Natural killer cell (primary cell): ENCODE measurements at regions of chr6 and their contacts with region 1.

Region 1: GRCh38 chr6:24991810-24992467 is 56.2 kb upstream of the RIPOR2 start:
- DNase-seq: peak; percentile 47 to 91
- ATAC-seq: peak; percentile 94 to 99 (median 98)
- H3K4me3 ChIP-seq: no peak overlapping the region
- H3K4me3 Mint-ChIP-seq: peak overlapping the region; percentile 14
- H3K27ac ChIP-seq: peak overlapping the region; percentile 52
- H3K27ac Mint-ChIP-seq: peak overlapping the region; percentile 61 to 84
- H3K4me1 ChIP-seq: peaks cover 14% of the 10 kb centered on the region
- H3K4me1 Mint-ChIP-seq: peaks cover 51 to 55% of the 10 kb centered on the region in 2 donors
- H3K27me3 ChIP-seq: no peaks in the 10 kb centered on the region
- H3K27me3 Mint-ChIP-seq: no peaks in the 10 kb centered on the region
- CTCF ChIP-seq: peak; percentile 84

Region 2: DNA sequence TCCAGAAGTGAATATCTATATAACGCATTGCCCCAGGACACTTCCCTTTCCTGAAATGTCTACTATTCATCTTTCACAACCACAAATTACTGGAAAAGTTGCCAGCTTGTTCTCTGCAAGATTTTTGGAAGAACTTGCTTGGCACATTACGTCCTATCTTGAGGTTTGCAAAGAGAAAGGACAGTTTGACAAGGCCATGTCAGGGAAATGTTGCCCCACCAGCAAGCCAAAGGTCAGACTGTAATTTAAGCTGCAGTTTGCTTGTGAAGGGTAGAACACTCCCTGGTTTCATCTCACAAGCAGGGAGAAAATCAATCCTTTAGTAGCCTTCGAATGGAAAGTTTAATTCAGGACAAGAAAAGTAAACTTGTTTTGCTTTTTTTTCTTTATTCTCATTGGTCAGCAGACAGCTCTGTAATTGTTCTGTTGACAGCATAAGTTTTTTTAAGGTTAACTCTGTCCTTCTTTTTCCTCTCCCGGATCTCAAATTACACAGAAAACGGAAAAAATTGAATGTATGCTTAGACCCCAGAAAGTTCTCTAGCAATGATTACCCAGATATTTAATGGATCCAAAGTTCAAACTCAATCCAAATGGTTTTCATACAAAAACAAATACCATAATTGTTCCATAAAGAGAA is 1407.7 kb before region 1 on chr6:
- intact Hi-C with region 1: no loop called
- DNase-seq: no peak
- ATAC-seq: no peak
- H3K4me3 ChIP-seq: no peak overlapping the region
- H3K4me3 Mint-ChIP-seq: no peak overlapping the region
- H3K27ac ChIP-seq: no peak overlapping the region
- H3K27ac Mint-ChIP-seq: no peak overlapping the region
- H3K4me1 ChIP-seq: no peaks in the 10 kb centered on the region
- H3K4me1 Mint-ChIP-seq: no peaks in the 10 kb centered on the region
- H3K27me3 ChIP-seq: no peaks in the 10 kb centered on the region
- H3K27me3 Mint-ChIP-seq: no peaks in the 10 kb centered on the region
- CTCF ChIP-seq: no peak

Region 3: GRCh38 chr6:24855395-24856245 is 136.3 kb before region 1 on chr6:
- intact Hi-C with region 1: loop called (anchors 1 kb)
- DNase-seq: peak; percentile 48 to 92
- ATAC-seq: peak; percentile 77 to 84 (median 83)
- H3K4me3 ChIP-seq: no peak overlapping the region
- H3K4me3 Mint-ChIP-seq: peak overlapping the region; percentile 49
- H3K27ac ChIP-seq: peak overlapping the region; percentile 45
- H3K27ac Mint-ChIP-seq: peak overlapping the region; percentile 93 to 95
- H3K4me1 ChIP-seq: peaks cover 45% of the 10 kb centered on the region
- H3K4me1 Mint-ChIP-seq: peaks cover 50 to 59% of the 10 kb centered on the region in 2 donors
- H3K27me3 ChIP-seq: no peaks in the 10 kb centered on the region
- H3K27me3 Mint-ChIP-seq: no peaks in the 10 kb centered on the region
- CTCF ChIP-seq: peak; percentile 84

Region 4: DNA sequence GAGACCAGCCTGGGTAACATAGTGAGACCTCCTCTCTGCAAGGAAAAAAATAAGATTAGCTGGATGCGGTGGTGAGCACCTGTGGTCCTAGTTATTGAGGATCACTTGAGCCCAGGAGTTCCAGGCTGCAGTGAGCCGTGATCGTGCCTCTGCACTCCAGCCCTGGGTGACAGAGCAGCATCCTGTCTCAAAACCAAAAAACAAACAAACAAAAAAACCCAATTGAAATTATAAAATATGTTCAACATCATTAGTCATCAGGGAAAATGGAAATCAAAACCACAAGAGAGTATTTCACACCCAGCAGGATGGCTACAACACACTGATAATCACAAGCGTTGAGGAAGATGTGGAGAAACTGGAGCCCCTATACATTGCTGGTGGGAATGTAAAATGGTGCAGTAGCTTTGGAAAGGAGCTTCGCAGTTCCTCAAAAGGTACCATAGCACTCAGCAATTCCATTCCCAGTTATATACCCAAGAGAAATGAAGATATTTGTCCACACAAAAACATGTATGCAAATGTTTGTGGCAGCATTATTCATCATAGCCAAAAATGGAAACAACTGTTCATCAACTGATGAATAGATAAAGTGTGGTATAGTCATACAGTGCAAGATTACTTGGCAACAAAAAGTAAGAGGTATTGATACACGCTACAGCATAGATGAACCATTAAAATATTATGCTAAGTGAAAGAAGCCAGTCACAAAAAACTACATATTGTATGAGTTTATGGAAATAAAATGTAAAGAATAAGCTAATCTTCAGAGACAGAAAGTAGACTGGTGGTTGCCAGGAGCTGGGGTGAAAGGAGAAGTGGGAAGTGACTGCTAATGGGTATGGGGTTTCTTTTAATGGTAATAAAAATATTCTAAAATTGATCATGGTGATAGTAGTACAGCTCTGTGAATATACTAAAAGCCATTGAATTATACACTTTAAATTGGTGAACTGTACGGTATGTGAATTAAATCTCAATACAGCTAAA is 17.5 kb before region 1 on chr6:
- intact Hi-C with region 1: loop called (anchors 2 kb)
- DNase-seq: peak in 1 of 2 donors; percentile 59
- ATAC-seq: peak; percentile 73 to 76 (median 74)
- H3K4me3 ChIP-seq: no peak overlapping the region
- H3K4me3 Mint-ChIP-seq: peak overlapping the region; percentile 54
- H3K27ac ChIP-seq: peak overlapping the region; percentile 76
- H3K27ac Mint-ChIP-seq: peak overlapping the region; percentile 90 to 92
- H3K4me1 ChIP-seq: peaks cover 21% of the 10 kb centered on the region
- H3K4me1 Mint-ChIP-seq: peaks cover 60 to 70% of the 10 kb centered on the region in 2 donors
- H3K27me3 ChIP-seq: no peaks in the 10 kb centered on the region
- H3K27me3 Mint-ChIP-seq: no peaks in the 10 kb centered on the region
- CTCF ChIP-seq: no peak

Region 5: DNA sequence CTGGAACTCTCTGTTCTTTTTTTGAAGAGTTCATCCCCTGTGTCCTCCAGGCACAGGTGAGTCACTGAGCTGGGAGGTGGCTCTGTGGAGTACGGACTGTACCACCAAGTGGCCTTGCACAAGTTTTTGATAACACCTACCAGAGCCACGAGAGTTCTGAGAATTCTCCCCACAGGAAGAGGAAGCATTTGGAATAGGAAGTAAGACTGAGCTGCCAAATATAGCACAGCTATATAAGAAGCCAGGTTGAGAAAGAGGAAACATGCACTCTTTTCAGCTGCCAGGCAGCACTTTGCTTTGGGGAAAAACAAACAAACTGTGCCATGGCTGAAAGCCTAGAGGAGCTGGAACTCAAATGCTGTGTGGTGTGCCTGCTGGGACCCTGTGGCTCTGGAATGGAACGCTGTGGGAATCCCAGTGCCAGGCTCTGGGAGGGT is 14.6 kb after region 1 on chr6:
- intact Hi-C with region 1: loop called (anchors 2 kb)
- DNase-seq: peak in 1 of 2 donors; percentile 62
- ATAC-seq: peak; percentile 21 to 78 (median 34)
- H3K4me3 ChIP-seq: no peak overlapping the region
- H3K4me3 Mint-ChIP-seq: peak overlapping the region; percentile 83
- H3K27ac ChIP-seq: peak overlapping the region; percentile 86
- H3K27ac Mint-ChIP-seq: peak overlapping the region; percentile 91 to 95
- H3K4me1 ChIP-seq: peaks cover 51% of the 10 kb centered on the region
- H3K4me1 Mint-ChIP-seq: peaks cover 74 to 81% of the 10 kb centered on the region in 2 donors
- H3K27me3 ChIP-seq: no peaks in the 10 kb centered on the region
- H3K27me3 Mint-ChIP-seq: no peaks in the 10 kb centered on the region
- CTCF ChIP-seq: no peak

Region 6: GRCh38 chr6:25017932-25018567 is 26.1 kb after region 1 on chr6:
- intact Hi-C with region 1: loop called (anchors 2 kb)
- DNase-seq: peak; percentile 69 to 92
- ATAC-seq: peak; percentile 94 to 97 (median 97)
- H3K4me3 ChIP-seq: no peak overlapping the region
- H3K4me3 Mint-ChIP-seq: no peak overlapping the region
- H3K27ac ChIP-seq: no peak overlapping the region
- H3K27ac Mint-ChIP-seq: peak overlapping the region; percentile 76 to 84
- H3K4me1 ChIP-seq: peaks cover 9% of the 10 kb centered on the region
- H3K4me1 Mint-ChIP-seq: peaks cover 23 to 30% of the 10 kb centered on the region in 2 donors
- H3K27me3 ChIP-seq: no peaks in the 10 kb centered on the region
- H3K27me3 Mint-ChIP-seq: no peaks in the 10 kb centered on the region
- CTCF ChIP-seq: peak; percentile 88

Region 7: GRCh38 chr6:25070547-25071366 is 78.8 kb after region 1 on chr6:
- intact Hi-C with region 1: loop called (anchors 1 kb)
- DNase-seq: peak; percentile 73 to 94
- ATAC-seq: peak; percentile 96 to 100 (median 99)
- H3K4me3 ChIP-seq: peak overlapping the region; percentile 11
- H3K4me3 Mint-ChIP-seq: peak overlapping the region; percentile 55
- H3K27ac ChIP-seq: peak overlapping the region; percentile 60
- H3K27ac Mint-ChIP-seq: peak overlapping the region; percentile 82 to 85
- H3K4me1 ChIP-seq: peaks cover 3% of the 10 kb centered on the region
- H3K4me1 Mint-ChIP-seq: peaks cover 6 to 16% of the 10 kb centered on the region in 2 donors
- H3K27me3 ChIP-seq: no peaks in the 10 kb centered on the region
- H3K27me3 Mint-ChIP-seq: no peaks in the 10 kb centered on the region
- CTCF ChIP-seq: peak; percentile 89

Region 8: DNA sequence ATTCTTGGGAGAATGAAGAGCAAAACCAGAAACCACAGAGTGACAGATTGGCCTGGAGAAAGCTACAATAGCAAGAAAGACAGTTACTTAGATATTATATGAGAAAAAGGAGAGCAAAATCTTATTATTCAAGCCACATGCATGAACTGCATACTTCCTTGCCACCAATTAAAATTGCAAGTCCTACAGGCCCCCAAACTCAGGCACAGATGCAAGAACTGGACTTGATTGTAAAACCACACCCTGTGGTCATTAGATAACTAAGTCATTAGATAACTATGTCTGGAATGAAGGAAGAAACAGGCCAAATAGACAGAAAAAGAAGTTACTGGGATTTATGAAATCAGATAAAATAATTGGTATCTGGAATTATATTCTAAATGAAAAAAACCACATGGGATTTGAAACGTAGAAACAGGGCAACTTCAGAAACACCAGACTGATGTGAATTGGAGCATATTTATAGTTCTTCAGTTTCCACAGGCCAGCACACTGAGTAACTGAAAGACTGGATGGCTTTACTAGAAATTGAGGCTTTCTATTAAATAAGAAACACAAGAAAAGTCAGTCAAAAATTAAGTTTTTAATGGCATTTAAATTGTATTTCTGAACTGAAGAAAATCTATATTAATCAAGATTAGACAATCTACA is 237.9 kb after region 1 on chr6:
- intact Hi-C with region 1: no loop called
- DNase-seq: no peak
- ATAC-seq: no peak
- H3K4me3 ChIP-seq: no peak overlapping the region
- H3K4me3 Mint-ChIP-seq: no peak overlapping the region
- H3K27ac ChIP-seq: no peak overlapping the region
- H3K27ac Mint-ChIP-seq: no peak overlapping the region
- H3K4me1 ChIP-seq: no peaks in the 10 kb centered on the region
- H3K4me1 Mint-ChIP-seq: no peaks in the 10 kb centered on the region
- H3K27me3 ChIP-seq: no peaks in the 10 kb centered on the region
- H3K27me3 Mint-ChIP-seq: peaks cover 3 to 8% of the 10 kb centered on the region in 2 donors
- CTCF ChIP-seq: no peak

Region 9: DNA sequence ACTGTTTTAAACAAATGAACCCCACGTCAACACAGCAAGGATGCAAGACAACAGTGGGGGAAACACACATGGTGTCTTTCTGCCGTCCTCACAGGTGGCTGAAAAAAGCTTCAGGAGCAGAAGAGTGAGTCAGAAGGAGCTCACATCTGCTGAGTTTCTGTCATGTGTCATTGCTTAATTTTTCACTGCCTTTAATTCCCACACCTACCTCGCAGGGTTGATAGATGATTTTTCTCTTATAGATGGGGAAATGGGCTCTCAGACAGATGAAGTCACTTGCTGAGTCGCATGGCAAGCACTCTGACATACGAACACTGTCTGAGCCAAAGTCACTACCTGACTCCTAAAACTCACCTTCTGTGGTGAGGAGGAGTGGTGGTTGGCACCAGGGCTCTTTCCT is 258.9 kb after region 1 on chr6:
- intact Hi-C with region 1: no loop called
- DNase-seq: no peak
- ATAC-seq: no peak
- H3K4me3 ChIP-seq: no peak overlapping the region
- H3K4me3 Mint-ChIP-seq: no peak overlapping the region
- H3K27ac ChIP-seq: no peak overlapping the region
- H3K27ac Mint-ChIP-seq: no peak overlapping the region
- H3K4me1 ChIP-seq: no peaks in the 10 kb centered on the region
- H3K4me1 Mint-ChIP-seq: no peaks in the 10 kb centered on the region
- H3K27me3 ChIP-seq: no peaks in the 10 kb centered on the region
- H3K27me3 Mint-ChIP-seq: peaks cover 6 to 9% of the 10 kb centered on the region in 2 donors
- CTCF ChIP-seq: no peak